Activated B cell treated with CpG ODN at 0.5 μM for 24 hours (primary cell): ENCODE measurements at regions of chr14 and their contacts with region 1.

Region 1: GRCh38 chr14:73452341-73453186 is 5.8 kb downstream of the NUMB start:
- DNase-seq: no peak
- ATAC-seq: peak; percentile 61
- H3K4me3 Mint-ChIP-seq: peak overlapping the region; percentile 50
- H3K27ac Mint-ChIP-seq: peak overlapping the region; percentile 70
- H3K4me1 Mint-ChIP-seq: peaks cover 51% of the 10 kb centered on the region
- H3K27me3 Mint-ChIP-seq: no peaks in the 10 kb centered on the region
- CTCF ChIP-seq: no peak

Region 2: GRCh38 chr14:73463411-73463810 is 10.8 kb after region 1 on chr14:
- CTCF ChIA-PET with region 1: no interaction called
- POLR2A ChIA-PET with region 1: interaction called, 16 read pairs
- intact Hi-C with region 1: loop called (anchors 1 kb)
- DNase-seq: no peak
- ATAC-seq: no peak
- H3K4me3 Mint-ChIP-seq: no peak overlapping the region
- H3K27ac Mint-ChIP-seq: peak overlapping the region; percentile 59
- H3K4me1 Mint-ChIP-seq: peaks cover 55% of the 10 kb centered on the region
- H3K27me3 Mint-ChIP-seq: no peaks in the 10 kb centered on the region
- CTCF ChIP-seq: no peak

Region 3: DNA sequence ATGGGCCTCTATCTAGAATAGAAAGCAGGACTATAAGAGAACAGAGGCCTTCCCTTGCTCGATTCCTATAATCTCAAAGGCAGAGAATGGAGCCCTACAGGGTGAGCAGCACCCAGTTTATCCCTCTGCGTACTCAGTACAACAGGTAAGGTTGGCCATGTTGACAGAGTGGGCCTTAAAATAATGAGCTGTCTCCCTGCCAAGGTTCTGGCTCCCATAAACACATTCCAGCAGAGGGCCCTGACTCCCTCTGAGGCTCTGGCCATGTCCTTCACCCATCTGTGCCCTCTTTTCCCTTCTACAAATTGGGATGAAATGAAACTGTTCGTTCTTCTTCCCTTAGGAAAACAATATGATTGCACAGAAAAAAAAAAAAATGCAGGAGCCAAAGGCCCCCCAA is 278.5 kb after region 1 on chr14:
- CTCF ChIA-PET with region 1: no interaction called
- POLR2A ChIA-PET with region 1: no interaction called
- intact Hi-C with region 1: no loop called
- DNase-seq: no peak
- ATAC-seq: no peak
- H3K4me3 Mint-ChIP-seq: no peak overlapping the region
- H3K27ac Mint-ChIP-seq: no peak overlapping the region
- H3K4me1 Mint-ChIP-seq: peaks cover 10% of the 10 kb centered on the region
- H3K27me3 Mint-ChIP-seq: no peaks in the 10 kb centered on the region
- CTCF ChIP-seq: no peak